ENCODE measurements at regions of chr3 and their contacts with region 1.

Region 1: GRCh38 chr3:151838583-151839312 is 24.8 kb downstream of the AADAC start:
- DNase-seq: no peak
- H3K4me3 ChIP-seq: peak overlapping the region; percentile 16 to 46 (median 29)
- H3K27ac ChIP-seq: no peak overlapping the region
- H3K4me1 ChIP-seq: peaks cover 0 to 26% (median 19%) of the 10 kb centered on the region in 4 donors
- H3K27me3 ChIP-seq: no peaks in the 10 kb centered on the region
- CTCF ChIP-seq: peak; percentile 78 to 86 (median 82)
- EP300 ChIP-seq: no peak
- POLR2A ChIP-seq: no peak

Region 2: GRCh38 chr3:151168269-151169094 is 670.3 kb before region 1 on chr3:
- intact Hi-C with region 1: loop called (anchors 10 kb)
- DNase-seq: no peak
- H3K4me3 ChIP-seq: no peak overlapping the region
- H3K27ac ChIP-seq: peak overlapping the region in 2 of 4 donors; percentile 8 to 30
- H3K4me1 ChIP-seq: peaks cover 0 to 5% (median 0%) of the 10 kb centered on the region in 4 donors
- H3K27me3 ChIP-seq: no peaks in the 10 kb centered on the region
- CTCF ChIP-seq: peak; percentile 70 to 74 (median 73)
- EP300 ChIP-seq: no peak
- POLR2A ChIP-seq: no peak

Region 3: DNA sequence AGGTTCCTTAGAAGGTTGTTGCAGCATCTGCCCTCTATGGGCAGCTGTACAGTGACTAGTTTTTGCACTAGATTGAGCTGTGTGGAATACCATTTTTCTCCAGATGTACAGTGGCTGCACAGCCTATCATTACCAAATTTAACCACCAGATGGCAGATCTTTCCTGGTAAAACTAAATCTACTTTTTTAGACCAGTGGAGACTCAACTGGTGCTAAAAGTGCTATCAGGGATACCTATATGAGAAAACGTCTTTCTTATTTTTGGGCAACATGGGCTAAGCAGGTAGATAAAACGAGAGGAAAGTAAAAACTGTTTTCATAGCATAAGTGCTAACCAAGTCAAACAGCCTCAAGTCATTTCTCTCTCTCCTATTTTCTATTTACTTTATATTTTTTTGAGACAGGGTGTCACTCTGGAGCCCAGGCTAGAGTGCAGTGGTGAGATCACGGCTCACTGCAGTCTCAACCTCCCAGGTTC is 399.1 kb before region 1 on chr3:
- intact Hi-C with region 1: loop called (anchors 2 kb)
- DNase-seq: no peak
- H3K4me3 ChIP-seq: no peak overlapping the region
- H3K27ac ChIP-seq: no peak overlapping the region
- H3K4me1 ChIP-seq: peaks cover 0 to 1% (median 0%) of the 10 kb centered on the region in 4 donors
- H3K27me3 ChIP-seq: no peaks in the 10 kb centered on the region
- CTCF ChIP-seq: peak; percentile 75 to 94 (median 92)
- EP300 ChIP-seq: no peak
- POLR2A ChIP-seq: no peak

Region 4: GRCh38 chr3:151468284-151468917 is 370.3 kb before region 1 on chr3:
- intact Hi-C with region 1: loop called (anchors 2 kb)
- DNase-seq: no peak
- H3K4me3 ChIP-seq: no peak overlapping the region
- H3K27ac ChIP-seq: no peak overlapping the region
- H3K4me1 ChIP-seq: no peaks in the 10 kb centered on the region
- H3K27me3 ChIP-seq: no peaks in the 10 kb centered on the region
- CTCF ChIP-seq: peak; percentile 64 to 90 (median 81)
- EP300 ChIP-seq: no peak
- POLR2A ChIP-seq: no peak

Region 5: GRCh38 chr3:151918253-151919029 is 79.7 kb after region 1 on chr3:
- intact Hi-C with region 1: loop called (anchors 5 kb)
- DNase-seq: no peak
- H3K4me3 ChIP-seq: no peak overlapping the region
- H3K27ac ChIP-seq: no peak overlapping the region
- H3K4me1 ChIP-seq: peaks cover 0 to 7% (median 0%) of the 10 kb centered on the region in 4 donors
- H3K27me3 ChIP-seq: no peaks in the 10 kb centered on the region
- CTCF ChIP-seq: peak; percentile 61 to 70 (median 67)
- EP300 ChIP-seq: no peak
- POLR2A ChIP-seq: no peak

Region 6: DNA sequence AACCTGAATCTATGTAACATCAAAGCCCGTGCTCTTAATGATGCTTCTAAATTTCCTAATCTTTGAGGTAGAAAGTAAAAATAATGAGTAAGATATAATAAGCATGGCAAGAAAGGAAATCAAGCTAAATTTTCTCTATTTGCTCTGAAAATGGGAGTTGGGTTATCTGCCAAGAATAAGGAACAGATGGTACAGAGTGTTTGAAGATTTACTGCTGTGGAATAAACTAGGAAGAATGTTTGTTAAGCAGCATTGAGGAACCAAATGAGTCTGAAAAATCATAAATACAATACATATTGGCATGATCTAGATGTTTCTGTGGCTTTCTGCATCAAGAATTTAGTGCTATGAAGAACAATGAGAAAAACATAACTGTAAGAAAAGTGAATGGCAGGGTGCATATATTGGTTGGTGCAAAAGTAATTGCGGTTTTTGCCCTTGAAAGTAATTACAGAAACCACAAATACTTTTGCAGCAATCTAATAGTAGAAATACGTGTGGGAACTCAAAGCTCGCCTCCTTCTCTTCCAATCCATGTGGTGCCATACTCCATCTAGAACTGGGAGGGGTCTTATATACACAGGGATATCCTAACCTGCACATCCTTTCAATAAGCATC is 122.3 kb after region 1 on chr3:
- intact Hi-C with region 1: no loop called
- DNase-seq: no peak
- H3K4me3 ChIP-seq: no peak overlapping the region
- H3K27ac ChIP-seq: no peak overlapping the region
- H3K4me1 ChIP-seq: no peaks in the 10 kb centered on the region
- H3K27me3 ChIP-seq: no peaks in the 10 kb centered on the region
- CTCF ChIP-seq: no peak
- EP300 ChIP-seq: no peak
- POLR2A ChIP-seq: no peak